Dendritic cell treated with granulocyte-macrophage colony-stimulating factor and Interleukin-4, amounts not matched to agents 40 ng/mL and 50 ng/mL, for 4 days (primary cell): ENCODE measurements at regions of chr10 and their contacts with region 1.

Region 1: DNA sequence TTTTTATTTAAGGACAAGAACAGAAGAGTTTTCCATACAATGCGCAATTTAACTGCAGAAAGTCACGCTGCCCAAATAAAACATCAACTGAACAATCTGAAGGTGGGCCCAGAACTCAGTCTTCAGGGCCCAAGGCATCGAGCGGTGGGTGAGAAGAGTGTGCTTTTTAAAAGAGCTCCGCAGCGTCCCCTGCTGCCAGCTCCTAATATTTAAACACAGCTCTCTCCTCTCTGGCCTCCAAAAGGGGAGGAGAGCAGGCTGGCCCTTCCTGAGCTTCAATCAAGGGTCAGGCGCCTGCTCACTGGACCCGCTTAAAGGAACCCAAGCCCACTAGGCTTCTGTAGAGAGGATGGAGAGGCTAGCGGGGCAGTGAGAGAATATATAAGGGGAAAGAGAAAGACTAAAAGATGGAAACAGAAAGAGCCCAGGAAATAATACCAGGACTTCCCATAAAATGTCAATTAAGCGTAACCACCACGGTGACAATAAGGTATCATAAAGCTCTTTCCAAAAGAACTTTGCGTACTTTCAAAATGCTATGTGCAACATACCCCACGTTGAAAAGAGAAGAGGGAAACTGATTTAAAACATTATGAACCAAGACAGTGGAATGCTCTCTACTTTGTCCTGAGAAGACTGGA is 2.8 kb downstream of the FAM53B start:
- H3K4me3 Mint-ChIP-seq: peak overlapping the region; percentile 72
- H3K27ac Mint-ChIP-seq: peak overlapping the region; percentile 75
- H3K4me1 Mint-ChIP-seq: peaks cover 70% of the 10 kb centered on the region
- H3K27me3 Mint-ChIP-seq: no peaks in the 10 kb centered on the region

Region 2: GRCh38 chr10:124539935-124540641 is 201.3 kb before region 1 on chr10:
- intact Hi-C with region 1: loop called (anchors 2 kb)
- H3K4me3 Mint-ChIP-seq: no peak overlapping the region
- H3K27ac Mint-ChIP-seq: no peak overlapping the region
- H3K4me1 Mint-ChIP-seq: peaks cover 36% of the 10 kb centered on the region
- H3K27me3 Mint-ChIP-seq: peaks cover 3% of the 10 kb centered on the region

Region 3: GRCh38 chr10:124688889-124689670 is 52.3 kb before region 1 on chr10:
- intact Hi-C with region 1: loop called (anchors 2 kb)
- H3K4me3 Mint-ChIP-seq: no peak overlapping the region
- H3K27ac Mint-ChIP-seq: peak overlapping the region; percentile 0
- H3K4me1 Mint-ChIP-seq: peaks cover 43% of the 10 kb centered on the region
- H3K27me3 Mint-ChIP-seq: no peaks in the 10 kb centered on the region

Region 4: DNA sequence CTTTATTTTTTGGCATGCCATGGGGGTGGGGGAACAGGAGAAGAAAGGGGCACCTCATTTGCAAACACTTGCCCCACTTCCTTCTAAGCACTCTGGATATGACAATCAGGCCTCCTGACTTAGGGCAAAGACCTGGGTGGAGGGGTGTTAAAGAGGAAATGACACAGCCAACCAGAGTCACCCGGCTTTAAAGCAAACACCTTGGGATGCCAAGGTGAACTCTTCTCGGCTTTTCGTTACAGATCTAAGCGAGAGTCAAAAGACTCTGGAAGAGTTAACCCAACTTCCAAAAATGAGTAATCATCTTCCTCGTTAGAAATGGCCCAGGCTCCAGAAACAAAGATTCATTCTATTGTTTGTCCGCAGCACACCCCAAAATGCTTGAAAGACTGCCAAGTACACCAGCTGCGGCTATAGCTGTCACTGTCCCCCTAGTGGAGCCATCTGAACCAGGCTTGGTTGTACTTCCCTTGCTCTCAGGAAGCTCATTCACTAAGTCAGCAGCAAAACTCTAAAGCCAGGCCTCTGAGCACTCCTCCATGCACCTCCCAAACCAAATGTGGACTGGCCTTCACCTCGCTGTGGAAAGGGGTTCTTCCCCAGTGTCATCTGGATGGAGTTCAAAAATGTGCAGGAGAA is 22.1 kb before region 1 on chr10:
- intact Hi-C with region 1: loop called (anchors 2 kb)
- H3K4me3 Mint-ChIP-seq: peak overlapping the region; percentile 14
- H3K27ac Mint-ChIP-seq: peak overlapping the region; percentile 86
- H3K4me1 Mint-ChIP-seq: peaks cover 91% of the 10 kb centered on the region
- H3K27me3 Mint-ChIP-seq: no peaks in the 10 kb centered on the region

Region 5: DNA sequence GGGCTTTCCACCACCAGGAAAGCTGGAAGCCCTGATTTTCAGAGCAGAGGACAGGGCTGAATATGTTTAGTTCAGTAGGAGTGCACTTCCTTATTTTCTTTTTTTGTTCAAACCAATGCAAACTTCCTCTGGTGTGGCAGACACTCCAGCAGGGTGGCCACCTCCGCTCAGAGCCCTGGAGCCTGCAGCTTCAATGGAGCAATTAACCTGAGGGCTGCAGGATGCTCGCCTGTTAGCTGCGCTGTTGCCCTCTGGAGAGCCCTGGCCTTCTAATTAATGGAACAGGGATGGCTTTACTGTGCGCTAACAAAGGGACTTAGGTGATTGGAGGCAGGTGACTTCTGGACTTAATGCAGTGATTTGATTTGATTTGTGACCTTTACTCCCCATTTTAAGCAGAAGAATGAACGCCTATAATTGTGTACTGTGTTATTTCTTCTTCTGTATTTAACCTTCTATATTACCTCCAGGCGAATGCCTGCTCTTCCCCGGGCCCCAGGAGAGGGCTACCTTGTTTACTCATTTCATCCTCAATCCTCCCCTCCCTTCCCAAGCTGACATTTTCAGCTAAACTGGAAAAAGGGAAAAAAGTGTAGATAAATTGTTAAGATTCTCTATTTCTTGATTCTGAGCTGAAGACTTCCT is 541.9 kb after region 1 on chr10:
- intact Hi-C with region 1: no loop called
- H3K4me3 Mint-ChIP-seq: no peak overlapping the region
- H3K27ac Mint-ChIP-seq: no peak overlapping the region
- H3K4me1 Mint-ChIP-seq: no peaks in the 10 kb centered on the region
- H3K27me3 Mint-ChIP-seq: peaks cover 8% of the 10 kb centered on the region